Transverse colon (tissue), 4 donors: ENCODE measurements at regions of chr12 and their contacts with region 1.

Region 1: GRCh38 chr12:38638406-38638805 is 267.0 kb downstream of the CPNE8 start:
- DNase-seq: no peak
- H3K4me3 ChIP-seq: no peak overlapping the region
- H3K27ac ChIP-seq: no peak overlapping the region
- H3K4me1 ChIP-seq: no peaks in the 10 kb centered on the region
- H3K27me3 ChIP-seq: no peaks in the 10 kb centered on the region
- CTCF ChIP-seq: no peak
- EP300 ChIP-seq: no peak
- POLR2A ChIP-seq: no peak

Region 2: DNA sequence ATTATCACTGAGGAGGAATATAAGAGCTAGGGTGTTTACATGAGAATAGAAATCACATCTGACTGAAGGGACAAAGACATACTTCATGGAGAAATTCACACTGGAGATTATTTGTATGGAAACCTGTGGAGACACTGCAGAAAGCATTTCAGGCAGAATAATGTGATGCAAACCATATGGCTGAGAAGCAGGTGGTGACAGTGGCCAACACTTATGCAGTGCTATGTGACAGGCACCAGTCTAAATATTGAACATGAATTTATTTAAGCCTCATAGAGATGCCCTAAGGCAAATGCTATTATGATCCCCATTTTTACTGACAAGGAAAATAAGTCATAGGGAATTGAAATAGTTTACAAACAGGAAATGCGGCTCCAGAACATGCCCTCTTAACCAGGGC is 305.6 kb before region 1 on chr12:
- in situ Hi-C with region 1: loop called in 1 of 4 experiments (anchors 25 kb)
- intact Hi-C with region 1: no loop called
- DNase-seq: no peak
- H3K4me3 ChIP-seq: no peak overlapping the region
- H3K27ac ChIP-seq: no peak overlapping the region
- H3K4me1 ChIP-seq: peaks cover 0 to 3% (median 0%) of the 10 kb centered on the region in 4 donors
- H3K27me3 ChIP-seq: no peaks in the 10 kb centered on the region
- CTCF ChIP-seq: no peak
- EP300 ChIP-seq: no peak
- POLR2A ChIP-seq: no peak

Region 3: DNA sequence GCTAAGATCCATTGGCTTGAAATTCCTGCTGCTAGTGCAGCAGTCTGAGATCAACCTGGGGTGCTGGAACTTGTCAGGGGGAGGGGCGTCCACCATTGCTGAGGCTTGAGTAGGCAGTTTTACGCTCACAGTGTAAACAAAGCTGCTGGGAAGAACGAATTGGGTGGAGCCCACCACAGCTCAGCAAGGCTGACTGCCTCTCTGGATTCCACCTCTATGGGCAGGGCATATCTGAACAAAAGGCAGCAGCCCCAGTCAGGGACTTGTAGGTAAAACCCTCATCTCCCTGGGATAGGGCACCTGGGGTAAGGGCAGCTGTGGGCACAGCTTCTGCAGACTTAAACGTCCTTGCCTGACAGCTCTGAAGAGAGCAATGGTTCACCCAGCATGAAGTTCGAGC is 130.2 kb before region 1 on chr12:
- in situ Hi-C with region 1: no loop called
- intact Hi-C with region 1: no loop called
- DNase-seq: no peak
- H3K4me3 ChIP-seq: no peak overlapping the region
- H3K27ac ChIP-seq: no peak overlapping the region
- H3K4me1 ChIP-seq: no peaks in the 10 kb centered on the region
- H3K27me3 ChIP-seq: no peaks in the 10 kb centered on the region
- CTCF ChIP-seq: no peak
- EP300 ChIP-seq: no peak
- POLR2A ChIP-seq: no peak

Region 4: GRCh38 chr12:40123486-40123885 is 1485.1 kb after region 1 on chr12:
- in situ Hi-C with region 1: no loop called
- intact Hi-C with region 1: no loop called
- DNase-seq: no peak
- H3K4me3 ChIP-seq: no peak overlapping the region
- H3K27ac ChIP-seq: no peak overlapping the region
- H3K4me1 ChIP-seq: no peaks in the 10 kb centered on the region
- H3K27me3 ChIP-seq: no peaks in the 10 kb centered on the region
- CTCF ChIP-seq: no peak
- EP300 ChIP-seq: no peak
- POLR2A ChIP-seq: no peak